BJ (cell line): ENCODE measurements at regions of chr20 and their contacts with region 1.

Region 1: GRCh38 chr20:1838556-1839279 is 56.5 kb upstream of the SIRPA start:
- DNase-seq: no peak
- H3K4me3 ChIP-seq: no peak overlapping the region
- H3K27me3 ChIP-seq: no peaks in the 10 kb centered on the region
- CTCF ChIP-seq: no peak

Region 2: GRCh38 chr20:1901704-1902103 is 63.0 kb after region 1 on chr20:
- CTCF ChIA-PET with region 1: no interaction called
- POLR2A ChIA-PET with region 1: interaction called, 15 read pairs
- DNase-seq: no peak
- H3K4me3 ChIP-seq: no peak overlapping the region
- H3K27me3 ChIP-seq: no peaks in the 10 kb centered on the region
- CTCF ChIP-seq: no peak